ENCODE measurements at regions of chr5 and their contacts with region 1.

Region 1: GRCh38 chr5:39599721-39600431 is 175.1 kb upstream of the DAB2 start:
- DNase-seq: peak; percentile 76
- H3K4me3 ChIP-seq: no peak overlapping the region
- H3K27ac ChIP-seq: no peak overlapping the region
- H3K4me1 ChIP-seq: 0 out of 2 replicates have a peak, but pooled peaks cover 3% of the 10 kb centered on the region
- H3K27me3 ChIP-seq: no peaks in the 10 kb centered on the region; the same call in 1 of the 2 replicates

Region 2: GRCh38 chr5:39080597-39081204 is 519.2 kb before region 1 on chr5:
- in situ Hi-C with region 1: no loop called
- DNase-seq: peak; percentile 85
- H3K4me3 ChIP-seq: no peak overlapping the region
- H3K27ac ChIP-seq: no peak overlapping the region
- H3K4me1 ChIP-seq: peaks cover 10% of the 10 kb centered on the region; the same call in 1 of the 2 replicates
- H3K27me3 ChIP-seq: no peaks in the 10 kb centered on the region

Region 3: GRCh38 chr5:39148983-39149534 is 450.8 kb before region 1 on chr5:
- in situ Hi-C with region 1: no loop called
- DNase-seq: peak; percentile 47
- H3K4me3 ChIP-seq: no peak overlapping the region
- H3K27ac ChIP-seq: no peak overlapping the region
- H3K4me1 ChIP-seq: no peaks in the 10 kb centered on the region
- H3K27me3 ChIP-seq: no peaks in the 10 kb centered on the region

Region 4: GRCh38 chr5:39319395-39319794 is 280.5 kb before region 1 on chr5:
- in situ Hi-C with region 1: no loop called
- DNase-seq: no peak
- H3K4me3 ChIP-seq: no peak overlapping the region
- H3K27ac ChIP-seq: no peak overlapping the region
- H3K4me1 ChIP-seq: no peaks in the 10 kb centered on the region
- H3K27me3 ChIP-seq: no peaks in the 10 kb centered on the region

Region 5: GRCh38 chr5:40736103-40736875 is 1136.4 kb after region 1 on chr5:
- in situ Hi-C with region 1: loop called (anchors 25 kb)
- DNase-seq: peak; percentile 68
- H3K4me3 ChIP-seq: no peak overlapping the region
- H3K27ac ChIP-seq: no peak overlapping the region
- H3K4me1 ChIP-seq: peaks cover 23% of the 10 kb centered on the region
- H3K27me3 ChIP-seq: no peaks in the 10 kb centered on the region

Region 6: GRCh38 chr5:40879163-40879942 is 1279.5 kb after region 1 on chr5:
- in situ Hi-C with region 1: loop called (anchors 25 kb)
- DNase-seq: peak; percentile 59
- H3K4me3 ChIP-seq: no peak overlapping the region
- H3K27ac ChIP-seq: no peak overlapping the region
- H3K4me1 ChIP-seq: no peaks in the 10 kb centered on the region
- H3K27me3 ChIP-seq: no peaks in the 10 kb centered on the region

Measured in GM23248 (cell line).